Activated CD8-positive, alpha-beta T cell treated with anti-CD3 and anti-CD28 coated beads, Interleukin-2, amount 10 ng/mL, durations not matched to agents 7 days and 5 days (primary cell): ENCODE measurements at regions of chr1 and their contacts with region 1.

Region 1: DNA sequence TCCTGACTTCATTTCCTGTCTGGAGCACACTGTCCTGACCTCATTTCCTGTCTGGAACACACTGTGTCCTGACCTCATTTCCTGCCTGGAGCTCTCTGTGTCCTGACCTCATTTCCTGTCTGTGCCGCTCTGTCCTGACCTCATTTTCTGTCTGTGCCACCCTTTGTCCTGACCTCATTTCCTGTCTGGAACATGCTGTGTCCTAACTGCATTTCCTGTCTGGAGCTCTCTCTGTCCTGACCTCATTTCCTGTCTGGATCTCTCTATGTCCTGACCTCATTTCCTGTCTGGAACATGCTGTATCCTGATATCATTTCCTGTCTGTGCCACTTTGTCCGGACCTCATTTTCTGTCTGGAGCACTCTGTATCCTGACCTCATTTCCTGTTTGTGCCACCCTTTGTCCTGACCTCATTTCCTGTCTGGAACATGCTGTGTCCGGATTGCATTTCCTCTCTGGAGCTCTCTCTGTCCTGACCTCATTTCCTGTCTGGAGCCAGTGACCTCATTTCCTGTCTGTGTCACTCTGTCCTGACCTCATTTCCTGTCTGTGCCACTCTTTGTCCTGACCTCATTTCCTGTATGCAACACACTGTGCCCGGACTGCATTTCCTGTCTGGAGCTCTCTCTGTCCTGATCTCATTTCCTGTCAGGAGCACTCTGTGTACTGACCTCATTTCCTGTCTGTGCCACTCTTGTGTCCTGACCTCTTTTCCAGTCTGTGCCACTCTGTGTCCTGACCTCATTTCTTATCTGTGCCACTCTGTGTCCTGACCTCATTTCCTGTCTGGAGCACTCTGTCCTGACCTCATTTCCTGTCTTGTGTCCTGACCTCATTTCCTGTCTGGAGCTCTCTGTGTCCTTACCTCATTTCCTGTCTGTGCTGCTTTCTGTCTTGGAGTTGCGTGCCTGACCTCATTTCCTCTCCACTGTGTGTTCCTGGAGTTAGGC is 27.6 kb downstream of the SKI start:
- DNase-seq: peak; percentile 88
- ATAC-seq: peak; percentile 68
- H3K4me3 Mint-ChIP-seq: no peak overlapping the region
- H3K27ac Mint-ChIP-seq: no peak overlapping the region
- H3K4me1 Mint-ChIP-seq: peaks cover 30% of the 10 kb centered on the region
- H3K27me3 Mint-ChIP-seq: no peaks in the 10 kb centered on the region

Region 2: DNA sequence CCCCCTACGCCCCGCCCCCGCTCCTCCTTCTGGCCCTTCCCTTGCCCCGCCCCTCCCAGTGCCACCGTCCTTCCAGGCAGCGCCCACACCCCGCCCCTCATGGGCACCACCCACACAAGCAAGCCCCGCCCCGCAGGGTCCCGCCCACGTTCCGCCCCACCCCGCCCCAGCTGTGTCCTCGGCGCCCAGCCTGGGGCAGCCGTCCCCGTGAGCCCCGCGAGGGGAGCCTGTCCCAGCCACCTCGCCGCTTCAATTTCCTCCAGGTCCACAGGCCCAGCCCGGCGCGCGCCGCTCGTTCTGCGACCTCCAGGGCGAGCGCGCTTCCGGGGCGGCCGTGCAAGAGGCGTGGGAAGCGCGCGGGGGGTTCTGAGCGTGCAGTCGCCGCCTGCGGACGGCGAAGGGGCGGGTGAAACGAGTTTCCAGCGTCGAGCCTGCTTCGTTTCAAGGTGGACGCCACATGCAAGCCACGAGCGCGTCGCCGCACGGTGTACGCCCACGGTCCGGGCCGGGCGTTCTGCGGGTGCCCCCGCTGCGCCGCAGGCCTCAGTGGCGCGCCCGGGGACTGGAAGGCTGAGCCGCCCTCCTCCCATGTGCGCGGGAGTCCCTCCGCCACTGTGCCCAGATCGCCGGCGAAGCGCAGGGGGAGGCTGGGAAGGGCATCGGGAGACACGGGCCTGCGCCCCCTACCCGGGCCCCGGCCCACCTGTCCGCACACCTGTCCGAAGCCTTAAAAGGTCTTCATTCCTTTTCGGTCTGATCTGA is 50.3 kb before region 1 on chr1:
- CTCF ChIA-PET with region 1: no interaction called
- POLR2A ChIA-PET with region 1: no interaction called
- DNase-seq: peak; percentile 96
- ATAC-seq: peak; percentile 89
- H3K4me3 Mint-ChIP-seq: peak overlapping the region; percentile 55
- H3K27ac Mint-ChIP-seq: peak overlapping the region; percentile 61
- H3K4me1 Mint-ChIP-seq: peaks cover 10% of the 10 kb centered on the region
- H3K27me3 Mint-ChIP-seq: no peaks in the 10 kb centered on the region

Region 3: GRCh38 chr1:2227346-2228153 is 28.1 kb before region 1 on chr1:
- CTCF ChIA-PET with region 1: no interaction called
- POLR2A ChIA-PET with region 1: interaction called, 36 read pairs
- DNase-seq: peak; percentile 95
- ATAC-seq: peak; percentile 81
- H3K4me3 Mint-ChIP-seq: peak overlapping the region; percentile 49
- H3K27ac Mint-ChIP-seq: peak overlapping the region; percentile 69
- H3K4me1 Mint-ChIP-seq: peaks cover 30% of the 10 kb centered on the region
- H3K27me3 Mint-ChIP-seq: peaks cover 8% of the 10 kb centered on the region

Region 4: GRCh38 chr1:2233997-2234761 is 21.5 kb before region 1 on chr1:
- CTCF ChIA-PET with region 1: interaction called, 4 read pairs
- POLR2A ChIA-PET with region 1: interaction called, 36 read pairs
- DNase-seq: peak; percentile 90
- ATAC-seq: peak; percentile 73
- H3K4me3 Mint-ChIP-seq: peak overlapping the region; percentile 77
- H3K27ac Mint-ChIP-seq: peak overlapping the region; percentile 90
- H3K4me1 Mint-ChIP-seq: peaks cover 78% of the 10 kb centered on the region
- H3K27me3 Mint-ChIP-seq: no peaks in the 10 kb centered on the region

Region 5: DNA sequence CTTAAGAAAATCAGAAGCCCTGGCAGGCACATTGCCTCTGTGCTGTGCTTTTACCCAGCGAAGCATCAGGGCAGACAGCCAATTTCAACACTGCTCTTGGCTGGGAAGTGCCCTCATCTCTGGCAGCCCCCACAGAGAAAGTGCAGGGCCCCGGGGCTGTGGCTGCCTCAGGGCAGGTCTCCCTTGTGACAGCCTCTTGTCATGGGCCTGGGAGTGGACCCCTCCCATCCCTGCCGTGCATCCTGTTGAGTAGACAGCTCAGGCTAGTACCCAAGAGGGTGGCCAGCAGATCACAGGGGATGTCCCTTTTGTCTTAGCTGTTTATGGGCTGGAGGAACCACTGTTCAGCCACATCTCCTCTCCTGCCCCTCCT is 522.5 kb after region 1 on chr1:
- CTCF ChIA-PET with region 1: no interaction called
- POLR2A ChIA-PET with region 1: no interaction called
- DNase-seq: no peak
- ATAC-seq: no peak
- H3K4me3 Mint-ChIP-seq: no peak overlapping the region
- H3K27ac Mint-ChIP-seq: no peak overlapping the region
- H3K4me1 Mint-ChIP-seq: no peaks in the 10 kb centered on the region
- H3K27me3 Mint-ChIP-seq: peaks cover 13% of the 10 kb centered on the region